Activated CD8-positive, alpha-beta T cell treated with anti-CD3 and anti-CD28 coated beads for 36 hours (primary cell): ENCODE measurements at regions of chr14 and their contacts with region 1.

Region 1: GRCh38 chr14:49767562-49768300 is at the start of gene KLHDC2:
- DNase-seq: peak; percentile 90
- ATAC-seq: peak; percentile 84
- H3K4me3 Mint-ChIP-seq: peak within 1 kb of the TSS; percentile 93
- H3K27ac Mint-ChIP-seq: peak within 1 kb of the TSS; percentile 98
- H3K4me1 Mint-ChIP-seq: peaks cover 31% of the 10 kb centered on the region
- H3K27me3 Mint-ChIP-seq: no peaks in the 10 kb centered on the region
- CTCF ChIP-seq: peak; percentile 25
- total RNA-seq, gene KLHDC2: 21.1 to 23.4 TPM

Region 2: DNA sequence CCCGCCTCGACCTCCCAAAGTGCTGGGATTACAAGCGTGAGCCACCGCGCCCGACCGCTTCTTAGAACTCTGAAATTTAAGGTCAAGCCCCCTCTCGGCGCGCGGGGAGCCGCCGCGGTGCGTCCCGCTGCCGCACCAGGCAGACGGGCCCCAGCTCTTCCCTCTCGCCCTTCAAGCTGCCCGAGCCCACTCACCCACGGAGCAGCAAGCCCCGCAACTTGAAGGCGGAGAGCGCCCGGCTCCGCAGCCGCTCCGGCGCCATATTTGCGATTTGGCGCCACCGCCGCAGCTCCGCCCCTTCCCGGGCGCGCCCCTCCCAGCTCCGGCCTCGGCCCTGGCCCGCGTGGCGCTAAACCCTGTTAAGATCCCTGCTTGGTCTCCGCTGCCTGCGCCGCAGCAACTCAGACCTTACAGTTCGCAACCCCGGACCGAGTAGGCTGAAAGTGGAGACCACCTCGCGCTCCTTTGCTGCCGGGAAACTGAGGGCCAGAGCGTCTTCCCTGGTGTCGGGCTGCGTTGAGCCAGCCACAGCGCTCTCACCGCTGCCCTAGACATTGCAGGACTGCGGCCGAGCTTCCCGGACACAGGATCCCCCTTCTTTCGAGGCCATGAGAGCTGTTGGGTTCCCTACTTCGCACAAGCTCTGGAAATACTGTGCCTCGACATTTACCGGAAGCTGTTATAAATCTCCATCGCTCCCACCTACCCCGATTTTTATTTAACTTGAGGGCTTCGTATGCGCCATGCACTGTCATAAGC is 79.6 kb before region 1 on chr14 and contains the start of gene POLE2:
- CTCF ChIA-PET with region 1: interaction called, 6 read pairs
- POLR2A ChIA-PET with region 1: interaction called, 18 read pairs
- intact Hi-C with region 1: loop called (anchors 2 kb)
- DNase-seq: peak; percentile 83
- ATAC-seq: peak; percentile 87
- H3K4me3 Mint-ChIP-seq: peak within 1 kb of the TSS; percentile 92
- H3K27ac Mint-ChIP-seq: peak within 1 kb of the TSS; percentile 91
- H3K4me1 Mint-ChIP-seq: peaks cover 33% of the 10 kb centered on the region
- H3K27me3 Mint-ChIP-seq: no peaks in the 10 kb centered on the region
- CTCF ChIP-seq: no peak
- total RNA-seq, gene POLE2: 36.3 to 36.5 TPM

Region 3: DNA sequence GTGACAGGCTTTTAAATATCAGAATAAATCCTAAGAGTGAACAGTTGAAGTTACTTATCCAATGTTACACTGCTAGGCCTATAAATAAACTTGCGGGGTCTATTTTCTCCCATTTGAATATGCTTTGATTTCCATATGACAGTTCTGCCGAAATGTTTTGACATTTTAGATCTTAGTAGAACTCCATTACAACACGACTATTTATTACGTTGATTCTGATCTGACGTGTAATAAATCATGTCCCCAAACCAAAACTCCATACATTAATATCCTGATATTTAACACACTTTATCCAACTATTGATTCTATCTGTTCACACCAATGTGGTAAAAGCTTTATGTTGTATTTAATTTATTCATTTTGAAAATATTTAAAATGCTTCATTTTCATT is 101.0 kb after region 1 on chr14:
- CTCF ChIA-PET with region 1: no interaction called
- POLR2A ChIA-PET with region 1: no interaction called
- intact Hi-C with region 1: no loop called
- DNase-seq: no peak
- ATAC-seq: no peak
- H3K4me3 Mint-ChIP-seq: peak overlapping the region; percentile 97
- H3K27ac Mint-ChIP-seq: peak overlapping the region; percentile 98
- H3K4me1 Mint-ChIP-seq: peaks cover 28% of the 10 kb centered on the region
- H3K27me3 Mint-ChIP-seq: no peaks in the 10 kb centered on the region
- CTCF ChIP-seq: no peak